ENCODE measurements at regions of chr4 and their contacts with region 1.

Region 1: GRCh38 chr4:17680559-17681280 is 66.3 kb downstream of the MED28 start:
- DNase-seq: no peak
- ATAC-seq: no peak
- H3K4me3 ChIP-seq: no peak overlapping the region
- H3K27ac ChIP-seq: no peak overlapping the region
- H3K4me1 ChIP-seq: no peaks in the 10 kb centered on the region
- H3K27me3 ChIP-seq: no peaks in the 10 kb centered on the region
- CTCF ChIP-seq: no peak

Region 2: DNA sequence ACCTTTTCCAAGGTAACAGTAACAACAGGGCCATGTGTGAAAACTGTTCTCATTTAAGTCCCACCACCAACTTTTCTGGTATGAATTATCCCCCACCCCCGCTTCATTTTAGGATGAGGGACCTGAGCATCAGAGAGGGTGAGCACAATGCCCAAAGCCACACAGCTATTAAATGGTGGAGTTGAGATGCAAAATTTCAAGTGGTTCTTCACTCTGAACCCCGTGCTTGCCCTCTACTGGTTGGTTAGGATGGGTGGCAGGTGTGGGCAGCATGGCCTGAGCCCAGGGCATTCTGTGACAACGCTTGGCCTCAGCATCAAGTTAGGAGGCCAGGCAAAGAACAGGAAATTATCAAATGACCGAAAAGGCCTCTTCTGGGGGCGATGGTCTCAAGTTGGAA is 32.8 kb before region 1 on chr4:
- intact Hi-C with region 1: loop called in 1 of 10 experiments (anchors 2 kb)
- DNase-seq: no peak
- ATAC-seq: no peak
- H3K4me3 ChIP-seq: no peak overlapping the region
- H3K27ac ChIP-seq: no peak overlapping the region
- H3K4me1 ChIP-seq: no peaks in the 10 kb centered on the region
- H3K27me3 ChIP-seq: no peaks in the 10 kb centered on the region
- CTCF ChIP-seq: no peak